Thyroid gland (tissue), 4 donors: ENCODE measurements at regions of chr15 and their contacts with region 1.

Region 1: GRCh38 chr15:59611276-59612260 is at the start of gene GCNT3:
- DNase-seq: no peak
- H3K4me3 ChIP-seq: no peak within 1 kb of the TSS
- H3K27ac ChIP-seq: no peak within 1 kb of the TSS
- H3K4me1 ChIP-seq: peaks cover 8 to 14% of the 10 kb centered on the region in 2 donors
- H3K27me3 ChIP-seq: no peaks in the 10 kb centered on the region
- CTCF ChIP-seq: no peak
- POLR2A ChIP-seq: no peak
- total RNA-seq, gene GCNT3: 0.13 to 2.2 (median 2.1) TPM in 3 of 4 donors, not detected in the other

Region 2: DNA sequence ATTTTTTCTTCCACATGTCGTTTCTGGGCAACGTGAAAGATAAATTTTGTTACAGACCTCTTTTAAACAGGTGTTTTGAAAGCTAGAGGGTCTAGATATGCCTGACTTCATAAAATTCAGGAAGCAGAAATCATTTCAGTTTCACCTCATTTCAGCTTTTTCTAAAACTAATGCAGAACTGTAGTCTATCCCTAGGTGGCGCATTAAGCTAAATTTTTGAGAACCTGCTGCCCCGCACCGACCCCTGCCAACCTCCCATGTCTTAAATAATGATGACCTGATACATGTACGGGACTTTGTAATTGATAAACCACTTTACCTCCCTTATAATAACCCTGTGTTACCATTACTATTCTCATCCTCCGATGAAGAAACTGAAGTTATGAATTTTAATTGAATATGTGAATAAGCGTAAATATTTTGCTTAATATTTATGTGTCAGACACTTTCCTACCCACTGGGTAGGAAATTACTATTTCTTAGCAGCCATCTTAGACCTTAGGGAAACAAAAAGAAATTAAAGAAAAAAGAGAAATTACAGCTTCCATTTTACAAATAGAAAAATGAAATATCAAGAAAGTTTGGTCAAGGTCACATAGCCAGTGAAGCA is 78.7 kb before region 1 on chr15:
- intact Hi-C with region 1: loop called (anchors 10 kb)
- DNase-seq: peak; percentile 37 to 48
- H3K4me3 ChIP-seq: no peak overlapping the region
- H3K27ac ChIP-seq: peak overlapping the region; percentile 38 to 55 (median 46)
- H3K4me1 ChIP-seq: peaks cover 0 to 5% of the 10 kb centered on the region in 2 donors
- H3K27me3 ChIP-seq: no peaks in the 10 kb centered on the region
- CTCF ChIP-seq: peak; percentile 39 to 82 (median 64)
- POLR2A ChIP-seq: no peak